BJ (cell line): ENCODE measurements at regions of chr3 and their contacts with region 1.

Region 1: GRCh38 chr3:99686955-99687612 is 48.7 kb downstream of the COL8A1 start:
- DNase-seq: no peak
- H3K4me3 ChIP-seq: no peak overlapping the region
- H3K27me3 ChIP-seq: no peaks in the 10 kb centered on the region
- CTCF ChIP-seq: peak; percentile 63

Region 2: DNA sequence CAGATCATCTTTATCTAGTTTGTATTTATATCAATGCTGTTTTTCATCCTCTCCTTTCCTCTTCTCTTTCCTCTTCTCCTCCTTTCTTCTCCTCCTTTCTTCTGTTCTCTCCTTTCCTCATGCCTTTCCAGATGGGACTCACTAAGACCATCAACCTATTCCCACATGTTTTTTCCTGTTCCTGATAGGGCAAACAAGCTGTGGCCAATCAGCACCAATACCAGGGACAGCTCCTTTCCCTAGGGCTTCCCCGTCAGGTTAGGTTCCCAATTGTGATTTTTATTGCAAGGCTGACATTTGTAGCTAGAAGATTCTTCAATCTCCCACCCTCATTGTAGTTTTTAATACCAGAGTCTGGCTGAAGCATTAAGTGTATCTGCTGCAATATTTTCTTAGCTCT is 124.9 kb before region 1 on chr3:
- CTCF ChIA-PET with region 1: no interaction called
- POLR2A ChIA-PET with region 1: no interaction called
- DNase-seq: no peak
- H3K4me3 ChIP-seq: no peak overlapping the region
- H3K27me3 ChIP-seq: no peaks in the 10 kb centered on the region
- CTCF ChIP-seq: no peak

Region 3: DNA sequence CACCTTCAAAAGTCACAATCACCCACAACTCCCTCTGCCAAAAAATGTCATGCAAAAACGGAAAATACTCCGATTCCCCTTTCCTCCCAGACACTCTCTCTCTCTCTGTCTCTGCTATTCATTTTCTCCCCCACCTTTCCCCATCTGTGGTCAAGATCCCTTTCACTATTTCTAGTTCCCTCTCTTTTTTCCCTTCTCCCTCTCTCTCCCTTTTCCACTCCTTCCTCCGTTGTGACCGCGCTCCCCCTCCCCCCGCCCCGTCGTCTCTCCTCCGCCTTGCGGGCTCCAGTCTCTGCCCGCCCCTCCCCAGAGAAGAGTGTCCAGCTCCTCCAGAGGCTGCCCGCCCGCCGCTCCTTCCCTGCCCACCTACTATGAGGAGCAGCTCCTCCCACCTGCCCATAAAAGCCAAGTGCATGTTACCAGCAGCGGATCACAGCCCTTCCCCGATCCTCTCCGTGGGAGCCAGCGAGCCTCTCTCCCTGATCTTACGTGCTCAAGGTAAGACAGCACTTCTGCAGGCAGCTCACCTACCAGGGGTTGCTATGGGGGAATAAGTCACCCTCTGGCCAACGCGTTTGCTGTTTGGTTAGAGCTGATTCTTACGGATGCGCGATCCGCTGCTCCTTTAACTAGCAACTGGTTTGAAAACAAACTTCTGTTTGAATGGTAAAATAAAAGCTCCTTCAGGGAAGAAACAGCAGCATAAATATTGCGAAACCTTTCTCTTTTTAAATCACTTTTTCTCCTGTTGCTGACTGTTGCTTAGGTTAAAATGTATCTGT is 48.7 kb before region 1 on chr3 and contains the start of gene COL8A1:
- CTCF ChIA-PET with region 1: interaction called, 11 read pairs
- POLR2A ChIA-PET with region 1: no interaction called
- DNase-seq: no peak
- H3K4me3 ChIP-seq: peak within 1 kb of the TSS; percentile 57
- H3K27me3 ChIP-seq: no peaks in the 10 kb centered on the region
- CTCF ChIP-seq: no peak
- polyA plus RNA-seq, gene COL8A1: 186 and 213 TPM in 2 replicates

Region 4: DNA sequence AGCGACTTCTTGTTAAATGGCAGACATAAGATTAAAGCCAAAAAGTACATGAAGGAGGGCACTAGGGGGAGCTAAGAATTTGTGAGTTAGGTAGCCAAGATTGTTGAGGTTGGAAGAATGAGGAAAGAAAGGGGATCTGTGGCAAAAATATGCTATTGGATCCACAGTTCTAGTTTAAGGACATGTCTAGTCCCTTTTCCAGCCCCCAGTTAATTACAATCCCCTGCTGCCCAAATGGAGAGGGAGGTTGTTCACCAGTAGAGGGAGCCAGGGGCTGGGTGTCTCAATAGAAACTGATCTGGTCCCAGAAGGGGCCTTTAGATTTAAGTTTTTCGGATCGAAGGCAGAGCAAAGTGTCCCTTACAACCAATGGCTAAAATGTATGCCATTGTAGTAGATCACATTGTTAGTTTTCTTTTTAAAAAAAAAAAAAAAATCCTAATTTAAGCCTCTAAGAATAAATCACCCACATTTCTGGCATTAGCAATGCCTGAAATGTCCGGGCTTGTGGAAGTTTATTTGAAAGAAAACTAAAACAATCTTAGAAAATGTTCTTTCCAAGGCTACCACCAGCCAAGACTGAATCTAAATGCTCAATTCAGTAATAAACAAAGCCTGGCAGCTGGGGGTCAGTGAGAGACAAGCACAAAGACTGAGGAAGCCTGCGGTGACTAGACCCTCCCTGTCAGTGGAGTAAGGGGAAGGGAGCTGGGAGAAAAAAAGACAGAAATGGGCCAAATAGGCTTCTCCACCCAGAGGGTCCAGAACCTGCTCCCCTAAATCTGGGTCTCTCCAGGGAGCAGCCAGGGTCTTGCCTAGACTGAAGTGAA is 41.6 kb before region 1 on chr3:
- CTCF ChIA-PET with region 1: interaction called, 20 read pairs
- POLR2A ChIA-PET with region 1: no interaction called
- DNase-seq: no peak
- H3K4me3 ChIP-seq: no peak overlapping the region
- H3K27me3 ChIP-seq: no peaks in the 10 kb centered on the region
- CTCF ChIP-seq: peak; percentile 53

Region 5: GRCh38 chr3:99668044-99668443 is 19.0 kb before region 1 on chr3:
- CTCF ChIA-PET with region 1: no interaction called
- POLR2A ChIA-PET with region 1: no interaction called
- DNase-seq: no peak
- H3K4me3 ChIP-seq: no peak overlapping the region
- H3K27me3 ChIP-seq: no peaks in the 10 kb centered on the region
- CTCF ChIP-seq: no peak

Region 6: DNA sequence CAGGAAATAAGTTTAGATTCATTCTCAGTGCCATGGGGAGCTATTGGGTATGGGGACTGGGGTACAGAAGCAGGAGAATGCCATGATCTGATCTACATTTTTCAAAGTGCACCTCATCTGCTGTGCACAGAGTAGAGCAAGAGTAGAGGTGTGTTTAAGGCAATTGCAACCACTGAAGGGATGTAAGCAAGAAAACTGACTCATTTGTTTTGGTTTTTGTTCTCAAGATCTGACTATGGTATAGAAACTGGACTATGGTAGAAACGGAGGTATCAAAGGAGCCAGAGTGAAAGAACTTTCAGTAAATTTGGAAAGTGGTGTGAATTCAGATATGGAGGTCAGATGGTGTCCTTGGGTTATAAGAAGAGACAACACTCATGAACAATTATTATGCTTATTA is 44.4 kb after region 1 on chr3:
- CTCF ChIA-PET with region 1: no interaction called
- POLR2A ChIA-PET with region 1: no interaction called
- DNase-seq: no peak
- H3K4me3 ChIP-seq: no peak overlapping the region
- H3K27me3 ChIP-seq: no peaks in the 10 kb centered on the region
- CTCF ChIP-seq: no peak

Region 7: DNA sequence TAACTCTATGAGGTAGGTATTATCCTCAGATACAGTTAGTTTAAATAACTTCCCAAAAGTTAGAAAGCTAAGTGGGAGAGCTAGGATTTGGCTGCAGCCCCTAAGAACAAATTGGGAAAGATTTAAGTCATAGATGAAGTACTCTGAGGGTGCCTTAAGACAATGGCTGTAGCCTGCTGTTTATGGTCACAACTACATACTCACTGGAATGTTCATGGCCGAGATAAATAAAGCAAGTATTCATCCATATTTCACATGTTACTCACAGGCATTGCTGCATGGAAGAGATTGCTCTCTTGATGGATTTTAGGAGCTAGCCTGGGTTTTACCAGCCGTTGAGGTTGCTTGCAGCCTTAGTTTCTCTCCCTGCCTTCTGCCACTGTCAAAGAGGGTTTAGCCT is 275.6 kb after region 1 on chr3:
- CTCF ChIA-PET with region 1: no interaction called
- POLR2A ChIA-PET with region 1: no interaction called
- DNase-seq: no peak
- H3K4me3 ChIP-seq: no peak overlapping the region
- H3K27me3 ChIP-seq: no peaks in the 10 kb centered on the region
- CTCF ChIP-seq: no peak